ENCODE measurements at regions of chr5 and their contacts with region 1.

Region 1: DNA sequence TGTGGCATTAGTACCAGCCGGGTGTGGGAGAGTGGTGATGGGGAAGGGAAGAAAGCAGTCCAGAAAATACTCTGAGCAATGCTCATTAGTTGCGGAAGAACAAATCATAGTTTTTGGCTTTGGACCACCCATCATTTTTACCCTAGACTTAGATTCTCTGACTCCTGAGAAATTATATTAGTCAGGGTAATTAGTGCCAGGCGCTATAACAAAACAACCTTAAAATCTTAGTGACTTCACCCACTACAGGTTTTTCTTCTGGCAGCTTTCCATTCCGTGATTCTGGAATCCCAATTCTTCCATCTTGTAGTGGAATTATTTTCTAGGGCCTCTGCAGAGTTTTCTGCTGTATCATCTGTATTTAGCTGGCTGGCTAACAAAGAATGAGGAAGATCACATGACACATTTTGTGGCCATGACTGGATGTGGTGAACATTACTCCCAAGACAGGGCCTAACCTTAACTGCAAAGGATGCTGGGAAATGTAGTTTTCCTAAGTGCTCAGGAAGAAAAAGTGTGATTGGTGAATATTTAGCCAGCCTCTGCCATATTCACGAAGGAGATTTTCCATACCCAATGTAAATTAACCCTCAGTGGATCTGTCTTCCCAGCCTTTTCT is 373.0 kb upstream of the MEF2C start:
- DNase-seq: no peak
- ATAC-seq: peak; percentile 58
- H3K4me3 Mint-ChIP-seq: no peak overlapping the region
- H3K27ac Mint-ChIP-seq: no peak overlapping the region
- H3K4me1 Mint-ChIP-seq: peaks cover 31% of the 10 kb centered on the region
- H3K27me3 Mint-ChIP-seq: no peaks in the 10 kb centered on the region
- CTCF ChIP-seq: no peak

Region 2: GRCh38 chr5:90264689-90265544 is 1009.0 kb after region 1 on chr5:
- CTCF ChIA-PET with region 1: no interaction called
- POLR2A ChIA-PET with region 1: no interaction called
- intact Hi-C with region 1: loop called (anchors 2 kb)
- DNase-seq: peak; percentile 28
- ATAC-seq: peak; percentile 68
- H3K4me3 Mint-ChIP-seq: peak overlapping the region; percentile 48
- H3K27ac Mint-ChIP-seq: no peak overlapping the region
- H3K4me1 Mint-ChIP-seq: peaks cover 6% of the 10 kb centered on the region
- H3K27me3 Mint-ChIP-seq: peaks cover 3% of the 10 kb centered on the region
- CTCF ChIP-seq: peak; percentile 92

Measured in activated B cell treated with CpG ODN at 0.5 μM for 24 hours (primary cell).